ENCODE measurements at regions of chr14 and their contacts with region 1.

Region 1: DNA sequence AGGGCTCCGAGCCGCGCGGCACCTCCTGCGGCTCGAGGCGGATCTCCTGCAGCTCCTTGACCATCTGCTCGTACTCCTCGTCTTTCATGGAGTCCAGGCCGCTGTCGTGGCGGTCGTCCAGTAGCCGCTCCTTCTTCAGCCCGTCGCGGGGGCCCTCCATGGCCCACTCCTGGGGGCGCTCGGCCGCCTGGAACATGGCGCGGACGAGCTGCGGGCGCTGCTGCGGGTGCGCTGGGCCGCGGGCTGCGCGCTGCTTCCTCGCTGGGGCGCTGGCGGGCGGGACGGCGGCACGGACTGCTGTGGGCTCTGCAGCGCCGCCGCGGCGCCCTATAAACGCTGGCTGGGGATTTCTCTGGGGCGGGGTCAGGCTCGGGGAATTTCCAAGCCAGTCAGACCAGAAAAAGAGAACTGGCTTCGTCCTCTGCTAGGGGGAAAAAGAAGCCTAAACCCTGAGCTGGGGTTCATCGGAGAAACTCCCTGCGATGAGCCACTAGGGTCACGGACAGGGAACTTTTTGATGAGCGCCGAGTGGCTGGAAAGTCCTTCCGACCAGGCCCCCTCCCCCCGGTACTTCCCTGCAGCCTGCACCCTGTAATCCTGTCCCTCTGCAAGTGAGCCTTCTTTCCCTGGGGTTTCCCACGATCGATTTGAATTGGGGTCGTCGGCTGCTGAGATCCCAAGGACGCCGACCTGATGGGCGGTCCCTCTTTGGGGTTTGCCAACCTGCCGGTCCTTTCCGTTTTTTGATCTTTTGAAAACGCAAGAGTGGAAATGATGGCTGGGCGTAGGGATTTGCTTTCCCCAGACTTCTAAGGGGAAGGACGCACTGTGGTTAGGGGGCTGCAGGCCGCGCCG is at the start of gene NFKBIA:
- DNase-seq: peak; percentile 90 to 94
- ATAC-seq: peak; percentile 71
- total RNA-seq, gene NFKBIA: 150 to 193 TPM

Region 2: GRCh38 chr14:35285168-35286002 is 119.3 kb before region 1 on chr14:
- intact Hi-C with region 1: loop called (anchors 5 to 10 kb)
- DNase-seq: no peak
- ATAC-seq: no peak

Region 3: DNA sequence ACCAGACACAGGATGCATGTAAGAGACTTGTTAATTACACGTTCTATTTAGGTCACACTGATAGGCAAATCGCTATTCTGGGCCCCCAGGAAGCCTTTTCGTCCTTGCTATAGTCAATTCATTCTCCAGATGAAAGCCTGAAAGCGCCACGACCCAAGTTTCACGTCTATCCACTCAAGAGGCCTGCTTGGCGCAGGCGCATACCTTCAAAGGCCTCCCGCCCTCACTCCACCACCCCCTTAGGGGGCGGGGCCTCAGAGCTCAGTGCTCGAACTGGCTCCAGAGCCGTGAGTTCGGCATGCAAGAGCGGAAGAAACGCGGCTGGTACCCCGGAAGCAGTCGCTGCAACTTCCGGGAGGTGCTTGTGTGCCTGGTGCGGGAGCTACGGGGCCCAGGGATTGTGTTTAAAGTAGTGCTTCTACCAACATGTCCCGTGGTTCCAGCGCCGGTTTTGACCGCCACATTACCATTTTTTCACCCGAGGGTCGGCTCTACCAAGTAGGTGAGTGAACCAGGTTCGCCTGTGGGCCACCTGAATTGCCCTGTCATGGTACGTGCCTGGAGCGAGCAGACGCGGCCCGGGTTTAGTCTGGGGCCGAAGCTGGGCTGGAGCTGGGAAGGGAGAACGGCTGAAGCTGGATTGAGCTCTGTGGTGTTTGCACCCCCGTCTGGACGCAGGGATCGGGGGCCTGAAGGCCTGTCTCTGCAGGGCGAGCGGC is 112.5 kb before region 1 on chr14 and contains the start of gene PSMA6:
- intact Hi-C with region 1: loop called (anchors 5 to 10 kb)
- DNase-seq: peak; percentile 99
- ATAC-seq: peak; percentile 94
- total RNA-seq, gene PSMA6: 138 to 171 TPM

Region 4: GRCh38 chr14:35341446-35342159 is 63.1 kb before region 1 on chr14:
- intact Hi-C with region 1: loop called in 1 of 2 experiments (anchors 5 kb)
- DNase-seq: peak; percentile 95 to 99
- ATAC-seq: peak; percentile 84